Ascending aorta (tissue), 2 donors: ENCODE measurements at regions of chrX and their contacts with region 1.

Region 1: GRCh38 chrX:118847676-118848075 is 24.1 kb downstream of the ZCCHC12 start:
- DNase-seq: no peak
- H3K4me3 ChIP-seq: no peak overlapping the region
- H3K27ac ChIP-seq: no peak overlapping the region
- H3K4me1 ChIP-seq: no peaks in the 10 kb centered on the region
- H3K27me3 ChIP-seq: no peaks in the 10 kb centered on the region
- CTCF ChIP-seq: peak; percentile 38 to 70 (median 48)

Region 2: DNA sequence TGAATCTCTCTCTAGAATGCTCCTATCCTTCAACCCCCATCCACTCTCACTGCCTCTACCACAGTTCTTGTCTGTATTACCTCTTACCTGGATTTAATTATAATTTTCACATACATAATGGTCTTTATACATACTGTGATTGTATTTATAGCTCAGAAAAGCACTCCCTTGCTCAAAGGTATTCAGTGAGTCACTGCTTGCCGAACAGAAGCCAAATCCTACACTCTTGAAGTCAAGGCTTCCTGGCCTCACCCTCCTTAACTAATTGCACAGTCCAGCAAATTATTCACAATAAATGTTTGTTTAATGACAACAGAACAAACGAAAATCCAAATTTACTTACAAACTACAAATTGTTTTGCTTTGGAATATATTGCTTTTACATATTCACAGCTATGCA is 890.5 kb before region 1 on chrX:
- intact Hi-C with region 1: no loop called
- DNase-seq: no peak
- H3K4me3 ChIP-seq: no peak overlapping the region
- H3K27ac ChIP-seq: no peak overlapping the region
- H3K4me1 ChIP-seq: no peaks in the 10 kb centered on the region
- H3K27me3 ChIP-seq: no peaks in the 10 kb centered on the region
- CTCF ChIP-seq: no peak

Region 3: DNA sequence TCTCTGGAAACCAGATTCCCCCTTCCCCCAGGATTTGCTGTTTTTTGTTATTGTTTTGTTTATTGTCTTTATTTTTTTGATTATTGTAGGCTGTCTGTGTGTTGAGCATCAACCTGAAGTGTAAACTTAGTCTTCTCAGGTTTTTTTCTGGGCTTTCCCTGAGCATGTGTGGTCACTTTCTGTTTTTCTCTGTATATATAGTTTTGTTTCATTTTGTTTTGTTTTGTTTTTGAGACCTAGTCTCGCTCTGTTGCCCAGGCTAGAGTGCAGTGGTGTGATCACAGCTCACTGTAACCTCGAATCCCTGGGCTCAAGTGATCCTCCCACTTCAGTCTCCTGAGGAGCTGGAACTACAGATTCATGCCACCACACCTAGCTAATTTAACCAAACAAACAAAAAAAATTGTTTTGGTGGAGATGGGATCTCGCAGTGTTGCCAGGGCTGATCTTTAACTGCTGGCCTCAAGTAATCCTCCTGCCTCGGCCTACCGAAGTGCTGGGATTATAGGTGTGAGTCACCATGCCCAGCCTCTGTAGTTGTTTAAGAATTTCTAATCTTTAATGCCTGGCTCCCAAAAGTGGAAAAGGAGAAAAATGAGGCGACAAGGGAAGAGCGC is 111.2 kb before region 1 on chrX:
- intact Hi-C with region 1: no loop called
- DNase-seq: no peak
- H3K4me3 ChIP-seq: no peak overlapping the region
- H3K27ac ChIP-seq: no peak overlapping the region
- H3K4me1 ChIP-seq: no peaks in the 10 kb centered on the region
- H3K27me3 ChIP-seq: no peaks in the 10 kb centered on the region
- CTCF ChIP-seq: no peak

Region 4: GRCh38 chrX:118974908-118975671 is 127.4 kb after region 1 on chrX:
- intact Hi-C with region 1: loop called (anchors 5 kb)
- DNase-seq: peak in 1 of 2 donors; percentile 66
- H3K4me3 ChIP-seq: peak overlapping the region; percentile 77 to 83
- H3K27ac ChIP-seq: peak overlapping the region; percentile 76 to 87
- H3K4me1 ChIP-seq: no peaks in the 10 kb centered on the region
- H3K27me3 ChIP-seq: no peaks in the 10 kb centered on the region
- CTCF ChIP-seq: no peak

Region 5: DNA sequence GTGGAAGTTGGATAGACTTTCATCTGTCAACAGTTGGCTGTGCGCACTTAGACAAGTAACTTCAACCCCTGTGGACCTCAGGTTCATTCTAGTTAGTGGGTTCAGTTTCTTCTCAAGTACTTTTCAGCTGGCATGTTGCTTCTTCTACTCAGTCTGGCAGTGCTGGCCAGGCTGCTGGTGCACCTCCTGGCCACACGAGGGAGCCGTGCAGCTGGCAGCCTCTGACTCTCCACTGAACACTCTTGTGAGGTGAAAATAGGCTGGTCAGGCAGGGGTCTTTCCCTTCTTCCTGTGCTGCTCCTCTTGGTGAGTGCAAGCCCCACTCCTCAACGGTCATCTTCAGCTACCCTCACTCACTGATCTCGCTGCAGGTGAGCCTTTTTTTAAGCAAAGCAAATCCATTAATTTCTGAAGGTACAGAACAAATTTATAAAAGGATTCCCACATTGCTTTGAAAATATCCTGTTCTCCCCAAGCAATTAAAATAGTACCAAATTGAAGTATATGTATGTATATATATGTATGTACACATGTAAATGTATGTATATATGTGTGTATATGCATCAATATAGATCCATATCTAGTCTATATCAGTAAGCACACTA is 157.3 kb after region 1 on chrX:
- intact Hi-C with region 1: loop called (anchors 1 kb)
- DNase-seq: peak in 1 of 2 donors; percentile 75
- H3K4me3 ChIP-seq: no peak overlapping the region
- H3K27ac ChIP-seq: no peak overlapping the region
- H3K4me1 ChIP-seq: no peaks in the 10 kb centered on the region
- H3K27me3 ChIP-seq: no peaks in the 10 kb centered on the region
- CTCF ChIP-seq: peak; percentile 38 to 93 (median 89)

Region 6: DNA sequence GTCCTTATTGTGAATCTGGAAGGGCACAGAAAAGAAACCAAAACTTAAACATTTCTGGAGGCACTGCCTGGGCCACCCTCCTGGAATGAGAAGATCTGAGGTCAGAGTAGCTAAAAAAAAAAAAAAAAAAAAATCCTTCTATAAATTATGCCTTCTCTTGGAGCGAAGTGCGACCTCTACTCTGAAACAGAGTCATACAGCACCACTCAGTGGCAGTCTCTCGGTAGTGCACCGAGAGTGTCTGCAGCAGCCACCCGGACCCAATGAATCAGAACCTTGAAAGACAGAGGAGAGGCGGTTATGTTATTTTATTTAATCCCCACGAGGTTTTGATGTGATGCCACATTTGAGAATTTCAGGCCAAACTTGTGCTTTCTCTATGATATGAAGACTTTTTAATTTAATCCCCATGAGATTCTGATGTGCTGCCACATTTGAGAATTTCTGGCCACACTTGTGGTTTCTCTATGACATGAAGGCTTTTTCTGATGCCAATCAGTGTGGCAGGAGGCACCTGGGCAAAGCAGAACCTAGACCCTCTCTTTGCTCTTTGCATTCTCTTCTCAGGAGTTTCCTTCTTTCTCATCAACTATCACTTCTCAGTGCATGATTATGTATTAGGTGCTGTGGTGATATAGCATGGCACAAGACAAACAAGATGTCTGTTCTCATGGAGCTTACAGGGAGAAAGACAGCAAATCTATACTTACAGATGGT is 219.5 kb after region 1 on chrX:
- intact Hi-C with region 1: loop called (anchors 2 kb)
- DNase-seq: peak in 1 of 2 donors; percentile 69
- H3K4me3 ChIP-seq: no peak overlapping the region
- H3K27ac ChIP-seq: no peak overlapping the region
- H3K4me1 ChIP-seq: no peaks in the 10 kb centered on the region
- H3K27me3 ChIP-seq: no peaks in the 10 kb centered on the region
- CTCF ChIP-seq: peak; percentile 15 to 58 (median 40)